ENCODE measurements at regions of chr3 and their contacts with region 1.

Region 1: GRCh38 chr3:130746246-130747039 is at the start of gene PIK3R4:
- DNase-seq: peak; percentile 93 to 99 (median 95)
- H3K4me3 ChIP-seq: peak within 1 kb of the TSS; percentile 99 to 100
- H3K4me3 Mint-ChIP-seq: peak within 1 kb of the TSS; percentile 90 to 95 (median 92)
- H3K27ac ChIP-seq: peak within 1 kb of the TSS; percentile 91
- H3K27ac Mint-ChIP-seq: peak within 1 kb of the TSS in 6 of 7 donors; percentile 97 to 99 (median 98)
- H3K4me1 ChIP-seq: peaks cover 47% of the 10 kb centered on the region
- H3K4me1 Mint-ChIP-seq: peaks cover 33 to 59% (median 49%) of the 10 kb centered on the region in 4 donors
- H3K27me3 ChIP-seq: no peaks in the 10 kb centered on the region
- H3K27me3 Mint-ChIP-seq: peaks cover 0 to 3% of the 10 kb centered on the region in 2 donors
- total RNA-seq, gene PIK3R4: 29.1 to 33.2 TPM

Region 2: GRCh38 chr3:130111185-130111864 is 635.1 kb before region 1 on chr3:
- CTCF ChIA-PET with region 1: no interaction called
- POLR2A ChIA-PET with region 1: no interaction called
- intact Hi-C with region 1: loop called (anchors 2 kb)
- DNase-seq: peak; percentile 97 to 99 (median 99)
- H3K4me3 ChIP-seq: peak overlapping the region in 1 of 2 donors; percentile 73
- H3K4me3 Mint-ChIP-seq: peak overlapping the region; percentile 96 to 100 (median 98)
- H3K27ac ChIP-seq: peak overlapping the region; percentile 82
- H3K27ac Mint-ChIP-seq: peak overlapping the region; percentile 94 to 100 (median 100)
- H3K4me1 ChIP-seq: peaks cover 8% of the 10 kb centered on the region
- H3K4me1 Mint-ChIP-seq: peaks cover 10 to 27% (median 12%) of the 10 kb centered on the region in 4 donors
- H3K27me3 ChIP-seq: no peaks in the 10 kb centered on the region
- H3K27me3 Mint-ChIP-seq: no peaks in the 10 kb centered on the region

Region 3: GRCh38 chr3:130725746-130726145 is 20.7 kb before region 1 on chr3:
- CTCF ChIA-PET with region 1: no interaction called
- POLR2A ChIA-PET with region 1: no interaction called
- intact Hi-C with region 1: loop called (anchors 1 kb)
- DNase-seq: no peak
- H3K4me3 ChIP-seq: no peak overlapping the region
- H3K4me3 Mint-ChIP-seq: no peak overlapping the region
- H3K27ac ChIP-seq: no peak overlapping the region
- H3K27ac Mint-ChIP-seq: no peak overlapping the region
- H3K4me1 ChIP-seq: no peaks in the 10 kb centered on the region
- H3K4me1 Mint-ChIP-seq: peaks cover 0 to 6% (median under 1%) of the 10 kb centered on the region in 4 donors
- H3K27me3 ChIP-seq: no peaks in the 10 kb centered on the region
- H3K27me3 Mint-ChIP-seq: no peaks in the 10 kb centered on the region

Region 4: DNA sequence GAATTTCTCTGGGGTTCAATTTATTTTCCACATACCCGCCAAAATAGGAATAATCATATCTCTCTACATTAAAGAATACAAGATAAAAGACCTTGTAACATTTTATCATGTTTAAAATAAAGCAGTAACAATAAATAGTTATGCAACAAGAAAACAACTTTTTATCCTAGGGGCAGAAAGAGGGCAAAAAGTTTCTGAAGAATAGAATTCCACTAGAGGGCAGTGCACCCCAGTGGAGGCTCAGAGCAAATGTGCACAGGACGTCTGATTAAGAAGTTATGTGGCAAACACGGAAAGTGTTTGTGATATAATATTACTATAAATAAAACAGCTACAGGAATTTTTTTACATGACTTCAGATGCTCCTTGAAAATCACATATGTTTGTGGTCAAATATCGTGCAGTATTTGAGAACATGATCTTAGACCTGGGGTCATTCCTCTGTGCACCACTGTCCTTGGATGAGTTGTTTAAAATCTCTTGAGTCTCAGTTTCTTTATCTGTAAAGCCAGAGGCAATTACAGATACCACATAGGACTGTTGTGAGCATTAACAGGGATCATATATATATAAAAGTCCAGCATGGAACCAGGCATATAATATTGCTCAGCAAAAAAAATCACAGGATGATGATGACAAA is 13.4 kb after region 1 on chr3:
- CTCF ChIA-PET with region 1: interaction called, 21 read pairs
- POLR2A ChIA-PET with region 1: no interaction called
- intact Hi-C with region 1: loop called (anchors 1 kb)
- DNase-seq: peak; percentile 55 to 63 (median 58)
- H3K4me3 ChIP-seq: no peak overlapping the region
- H3K4me3 Mint-ChIP-seq: no peak overlapping the region
- H3K27ac ChIP-seq: no peak overlapping the region
- H3K27ac Mint-ChIP-seq: peak overlapping the region in 1 of 7 donors; percentile 65
- H3K4me1 ChIP-seq: no peaks in the 10 kb centered on the region
- H3K4me1 Mint-ChIP-seq: no peaks in the 10 kb centered on the region
- H3K27me3 ChIP-seq: no peaks in the 10 kb centered on the region
- H3K27me3 Mint-ChIP-seq: peaks cover 4 to 12% of the 10 kb centered on the region in 2 donors

Region 5: DNA sequence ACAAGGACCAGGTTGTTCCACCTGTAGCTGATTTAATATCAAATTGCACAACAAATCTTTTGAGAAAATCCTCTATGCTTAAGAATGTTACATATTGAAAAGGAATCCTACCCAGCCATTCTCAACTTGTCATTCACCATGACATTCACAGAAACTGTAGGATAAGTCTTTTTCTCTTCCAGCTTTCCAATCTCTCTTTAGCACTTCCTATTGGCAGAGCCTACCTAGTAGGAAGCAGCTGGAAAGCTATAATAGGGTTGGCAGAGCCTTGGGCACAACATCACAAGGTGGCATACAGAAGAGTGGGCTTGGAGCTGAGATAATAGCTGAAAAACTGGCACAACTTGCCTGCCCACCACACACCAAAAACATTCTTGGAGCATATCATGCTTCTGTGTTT is 567.9 kb after region 1 on chr3:
- CTCF ChIA-PET with region 1: no interaction called
- POLR2A ChIA-PET with region 1: no interaction called
- intact Hi-C with region 1: no loop called
- DNase-seq: no peak
- H3K4me3 ChIP-seq: no peak overlapping the region
- H3K4me3 Mint-ChIP-seq: no peak overlapping the region
- H3K27ac ChIP-seq: no peak overlapping the region
- H3K27ac Mint-ChIP-seq: no peak overlapping the region
- H3K4me1 ChIP-seq: no peaks in the 10 kb centered on the region
- H3K4me1 Mint-ChIP-seq: no peaks in the 10 kb centered on the region
- H3K27me3 ChIP-seq: no peaks in the 10 kb centered on the region
- H3K27me3 Mint-ChIP-seq: peaks cover 0 to 8% of the 10 kb centered on the region in 2 donors

Region 6: DNA sequence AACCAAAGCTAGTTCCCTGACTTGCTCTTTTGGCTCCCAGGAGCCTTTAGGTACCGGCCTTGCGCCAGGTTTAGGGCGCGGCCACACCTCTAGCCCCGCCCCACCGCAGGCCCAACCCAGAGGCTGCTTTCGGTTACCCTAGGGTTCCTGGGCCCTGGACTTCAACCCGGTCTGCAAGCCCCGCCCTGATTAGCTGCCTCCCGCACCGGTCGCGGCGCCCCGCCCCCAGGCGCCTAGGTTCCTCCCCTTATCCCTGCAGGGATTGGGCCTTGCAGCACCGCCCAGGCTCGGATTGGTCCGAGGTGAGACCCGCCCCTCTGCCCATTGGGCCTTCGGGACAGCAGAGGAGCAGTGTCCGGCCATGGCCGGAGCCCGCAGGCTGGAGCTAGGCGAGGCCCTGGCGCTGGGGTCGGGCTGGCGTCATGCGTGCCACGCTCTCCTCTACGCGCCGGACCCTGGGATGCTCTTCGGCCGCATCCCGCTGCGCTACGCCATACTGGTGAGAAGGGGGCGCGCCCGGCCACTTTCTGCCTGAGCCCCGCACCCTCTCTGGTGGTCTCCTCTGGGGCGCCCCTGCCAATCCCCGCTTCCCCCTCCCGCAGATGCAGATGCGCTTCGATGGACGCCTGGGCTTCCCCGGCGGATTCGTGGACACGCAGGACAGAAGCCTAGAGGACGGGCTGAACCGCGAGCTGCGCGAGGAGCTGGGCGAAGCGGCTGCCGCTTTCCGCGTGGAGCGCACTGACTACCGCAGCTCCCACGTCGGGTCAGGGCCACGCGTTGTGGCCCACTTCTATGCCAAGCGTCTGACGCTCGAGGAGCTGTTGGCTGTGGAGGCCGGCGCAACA is 635.2 kb after region 1 on chr3 and contains the start of gene NUDT16:
- CTCF ChIA-PET with region 1: no interaction called
- POLR2A ChIA-PET with region 1: no interaction called
- intact Hi-C with region 1: loop called (anchors 1 kb)
- DNase-seq: peak; percentile 92 to 96 (median 94)
- H3K4me3 ChIP-seq: peak within 1 kb of the TSS; percentile 89 to 95
- H3K4me3 Mint-ChIP-seq: peak within 1 kb of the TSS; percentile 96 to 98 (median 96)
- H3K27ac ChIP-seq: peak within 1 kb of the TSS; percentile 61
- H3K27ac Mint-ChIP-seq: peak within 1 kb of the TSS; percentile 90 to 99 (median 96)
- H3K4me1 ChIP-seq: peaks cover 28% of the 10 kb centered on the region
- H3K4me1 Mint-ChIP-seq: peaks cover 33 to 43% (median 38%) of the 10 kb centered on the region in 4 donors
- H3K27me3 ChIP-seq: no peaks in the 10 kb centered on the region
- H3K27me3 Mint-ChIP-seq: no peaks in the 10 kb centered on the region
- total RNA-seq, gene NUDT16: 15.6 to 16.7 TPM

Region 7: DNA sequence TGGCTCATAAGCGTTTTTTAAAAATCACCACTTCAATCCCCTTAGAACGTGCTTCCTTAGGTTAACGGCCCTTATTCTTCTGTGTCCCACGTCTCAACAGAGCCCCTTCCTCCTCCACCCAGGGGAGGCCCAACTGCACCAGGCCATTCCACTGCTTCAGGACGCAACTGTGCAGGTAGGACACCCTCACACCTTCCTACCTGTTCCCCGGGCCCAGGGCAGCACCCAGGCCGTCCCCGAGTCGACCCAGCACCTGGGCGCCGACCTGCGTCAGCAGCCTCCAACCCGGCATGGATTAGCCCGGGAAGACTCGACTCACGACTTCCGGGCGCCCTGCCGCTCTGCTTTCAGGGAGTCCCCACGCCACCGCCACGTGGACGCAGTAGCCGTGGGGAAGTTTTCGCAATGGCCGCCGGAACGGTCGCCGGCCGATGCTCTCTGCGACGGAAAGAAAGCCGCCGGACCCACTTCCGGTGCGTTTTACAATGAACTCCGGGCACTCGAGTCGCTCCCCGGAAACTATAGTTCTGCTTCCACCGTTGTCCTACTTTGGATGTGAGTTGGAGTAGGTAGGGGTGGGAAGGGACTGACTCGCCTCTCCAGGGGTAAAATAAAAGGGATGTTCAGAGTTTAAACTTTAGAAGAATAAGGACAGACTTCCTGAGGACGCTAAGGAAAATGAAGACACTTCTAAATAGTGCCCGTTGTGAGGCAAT is 756.2 kb after region 1 on chr3 and contains the start of gene MRPL3:
- CTCF ChIA-PET with region 1: no interaction called
- POLR2A ChIA-PET with region 1: no interaction called
- intact Hi-C with region 1: loop called (anchors 2 kb)
- DNase-seq: peak; percentile 79 to 85 (median 81)
- H3K4me3 ChIP-seq: peak within 1 kb of the TSS; percentile 74 to 98
- H3K4me3 Mint-ChIP-seq: peak within 1 kb of the TSS; percentile 91 to 100 (median 98)
- H3K27ac ChIP-seq: peak within 1 kb of the TSS; percentile 75
- H3K27ac Mint-ChIP-seq: peak within 1 kb of the TSS; percentile 92 to 97 (median 95)
- H3K4me1 ChIP-seq: peaks cover 27% of the 10 kb centered on the region
- H3K4me1 Mint-ChIP-seq: peaks cover 25 to 47% (median 38%) of the 10 kb centered on the region in 4 donors
- H3K27me3 ChIP-seq: no peaks in the 10 kb centered on the region
- H3K27me3 Mint-ChIP-seq: no peaks in the 10 kb centered on the region
- total RNA-seq, gene MRPL3: 45.8 to 48.1 TPM

Region 8: GRCh38 chr3:132416807-132417694 is 1670.6 kb after region 1 on chr3 and contains the start of gene DNAJC13:
- CTCF ChIA-PET with region 1: no interaction called
- POLR2A ChIA-PET with region 1: interaction called, 6 read pairs
- intact Hi-C with region 1: loop called (anchors 2 kb)
- DNase-seq: peak; percentile 91 to 95 (median 93)
- H3K4me3 ChIP-seq: peak within 1 kb of the TSS; percentile 84 to 89
- H3K4me3 Mint-ChIP-seq: peak within 1 kb of the TSS; percentile 96 to 100 (median 99)
- H3K27ac ChIP-seq: peak within 1 kb of the TSS; percentile 82
- H3K27ac Mint-ChIP-seq: peak within 1 kb of the TSS; percentile 95 to 99 (median 98)
- H3K4me1 ChIP-seq: peaks cover 23% of the 10 kb centered on the region
- H3K4me1 Mint-ChIP-seq: peaks cover 20 to 38% (median 26%) of the 10 kb centered on the region in 4 donors
- H3K27me3 ChIP-seq: no peaks in the 10 kb centered on the region
- H3K27me3 Mint-ChIP-seq: no peaks in the 10 kb centered on the region
- total RNA-seq, gene DNAJC13: 43.1 to 43.5 TPM